ENCODE measurements at regions of chr20 and their contacts with region 1.

Region 1: DNA sequence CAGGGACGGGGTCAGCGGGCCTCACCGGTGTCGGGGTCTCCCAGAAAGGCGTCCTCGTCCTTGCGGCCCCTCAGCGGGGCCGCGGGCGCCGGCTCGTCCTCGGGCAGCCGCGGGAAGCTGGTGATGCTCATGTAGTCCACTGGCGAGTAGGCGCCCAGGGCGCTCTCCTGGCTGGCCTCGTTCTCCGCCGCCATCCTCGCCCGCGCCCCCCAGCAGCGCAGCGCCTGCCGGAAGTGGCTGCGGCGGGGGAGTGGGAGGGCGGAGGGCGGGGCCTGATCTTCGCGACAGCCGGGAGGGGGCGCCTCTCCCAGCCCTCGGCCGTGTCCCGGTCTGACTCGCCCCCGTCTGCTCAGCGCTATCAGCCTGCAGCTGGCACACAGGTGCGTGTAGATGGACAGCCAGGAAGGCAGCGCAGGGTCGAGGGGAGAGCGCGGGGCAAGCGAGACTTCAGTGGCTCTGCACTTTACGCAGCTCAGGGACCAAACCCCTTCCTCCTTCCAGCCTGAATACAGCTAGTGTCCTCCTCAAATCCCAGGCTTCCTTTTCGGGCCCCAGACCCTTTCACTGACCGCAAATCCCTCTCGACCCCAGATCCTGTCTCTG is at the start of gene GGT7:
- DNase-seq: peak; percentile 90
- H3K4me3 ChIP-seq: peak within 1 kb of the TSS; percentile 44 to 74 (median 68)
- H3K27ac ChIP-seq: peak within 1 kb of the TSS; percentile 69 to 77 (median 74)
- H3K4me1 ChIP-seq: peaks cover 19 to 47% (median 41%) of the 10 kb centered on the region in 4 donors
- H3K27me3 ChIP-seq: no peaks in the 10 kb centered on the region
- CTCF ChIP-seq: peak; percentile 67 to 82 (median 70)
- EP300 ChIP-seq: no peak
- POLR2A ChIP-seq: peak; percentile 36
- total RNA-seq, gene GGT7: 11.2 to 19.1 (median 15.1) TPM

Region 2: DNA sequence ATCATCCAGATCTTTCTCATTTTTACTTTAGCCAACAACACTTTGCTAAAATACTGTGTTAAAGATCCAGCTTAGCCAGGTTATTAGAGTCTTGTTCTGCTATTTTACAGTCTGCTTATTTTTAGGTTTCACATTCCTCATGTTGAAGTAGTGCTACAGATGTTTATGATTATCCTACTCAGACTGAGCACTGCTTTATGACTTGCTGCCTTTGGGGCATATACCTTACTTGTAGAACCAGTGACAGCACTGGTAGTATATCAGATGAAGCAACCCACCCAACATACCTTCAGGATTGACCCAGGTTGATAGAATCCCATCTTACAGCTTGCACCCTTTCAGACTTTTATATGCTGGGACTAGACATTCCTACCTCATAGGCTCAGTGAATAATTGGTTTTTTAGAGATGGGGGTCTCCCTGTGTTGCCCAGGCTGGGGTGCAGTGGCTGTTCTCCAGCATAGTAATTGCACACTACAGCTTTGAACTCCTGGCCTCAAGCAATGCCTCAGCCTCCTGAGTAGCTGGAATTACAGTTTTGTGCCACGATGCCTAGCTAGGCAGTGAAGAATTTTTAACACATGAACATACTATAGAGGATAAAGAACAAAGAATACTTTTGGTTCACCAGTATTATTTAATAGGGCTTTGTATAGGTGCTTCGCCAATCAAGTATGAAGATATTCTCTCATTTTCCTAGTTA is 420.3 kb before region 1 on chr20:
- in situ Hi-C with region 1: no loop called
- intact Hi-C with region 1: no loop called
- DNase-seq: no peak
- H3K4me3 ChIP-seq: no peak overlapping the region
- H3K27ac ChIP-seq: no peak overlapping the region
- H3K4me1 ChIP-seq: no peaks in the 10 kb centered on the region
- H3K27me3 ChIP-seq: no peaks in the 10 kb centered on the region
- CTCF ChIP-seq: no peak
- EP300 ChIP-seq: no peak
- POLR2A ChIP-seq: no peak

Region 3: DNA sequence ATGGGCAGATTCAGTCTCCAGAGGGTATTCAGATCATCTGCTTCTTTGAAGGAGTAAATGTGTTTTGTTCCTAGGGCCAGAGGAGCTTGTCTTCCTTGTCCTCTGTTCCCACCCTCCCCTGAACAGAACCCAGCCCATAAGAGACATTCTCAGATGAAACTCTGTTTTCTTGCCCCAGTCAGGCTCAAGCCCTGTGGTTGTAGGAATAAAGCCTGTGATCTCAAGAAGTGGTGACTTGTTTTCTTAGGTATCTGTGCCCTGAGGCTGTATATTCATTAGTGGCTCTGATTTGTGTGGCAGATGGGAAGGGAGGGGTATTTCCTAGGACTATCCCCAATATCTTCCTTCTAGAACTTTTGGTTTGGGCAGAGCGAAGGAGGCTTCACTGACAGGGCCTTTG is 55.0 kb after region 1 on chr20:
- in situ Hi-C with region 1: no loop called
- intact Hi-C with region 1: no loop called
- DNase-seq: no peak
- H3K4me3 ChIP-seq: no peak overlapping the region
- H3K27ac ChIP-seq: no peak overlapping the region
- H3K4me1 ChIP-seq: no peaks in the 10 kb centered on the region
- H3K27me3 ChIP-seq: no peaks in the 10 kb centered on the region
- CTCF ChIP-seq: no peak
- EP300 ChIP-seq: no peak
- POLR2A ChIP-seq: no peak

Region 4: DNA sequence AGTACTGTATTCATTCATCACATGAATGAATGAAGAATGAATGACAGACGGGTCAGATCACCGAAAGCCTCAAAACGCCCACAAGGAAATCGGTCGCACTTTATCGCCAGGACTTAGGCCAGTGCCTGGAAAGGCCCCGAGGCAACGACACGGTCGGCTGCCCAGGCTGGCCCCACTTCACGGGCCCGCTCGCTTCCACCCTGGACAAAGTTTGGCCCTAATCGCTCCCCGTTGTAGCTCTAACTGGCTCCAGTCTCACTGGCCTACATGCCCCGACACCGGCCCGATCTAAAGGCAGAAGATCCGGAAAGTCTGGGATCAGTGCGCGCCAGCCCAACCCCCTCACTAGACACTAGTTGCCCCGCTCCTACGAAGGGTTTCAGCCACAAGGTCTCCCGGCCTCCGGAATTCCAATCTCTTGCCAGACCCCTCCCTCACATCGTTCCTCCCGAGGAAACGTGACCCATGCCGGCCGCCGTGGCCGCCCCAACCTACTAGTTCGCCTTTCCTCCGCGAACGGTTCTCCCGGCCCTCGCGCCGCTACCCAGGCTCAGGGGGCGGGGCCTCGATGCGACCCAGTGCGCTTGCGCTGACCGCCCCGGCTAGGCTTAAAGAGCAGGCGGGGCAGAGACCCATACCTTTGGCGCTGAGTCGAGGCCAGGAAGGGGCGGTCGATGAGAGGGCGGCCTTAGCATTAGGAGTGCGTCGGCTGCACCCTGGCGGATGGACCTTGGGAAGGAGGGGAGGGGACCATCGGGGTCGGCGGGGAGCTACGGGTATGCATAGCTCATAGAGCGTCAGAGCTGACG is 82.7 kb after region 1 on chr20 and contains the starts of genes GSS and MYH7B:
- in situ Hi-C with region 1: loop called in 3 of 4 experiments (anchors 5 kb)
- intact Hi-C with region 1: loop called (anchors 5 kb)
- DNase-seq: peak; percentile 99
- H3K4me3 ChIP-seq: peak within 1 kb of the TSS; percentile 42 to 79 (median 63)
- H3K27ac ChIP-seq: peak within 1 kb of the TSS; percentile 86 to 91 (median 90)
- H3K4me1 ChIP-seq: peaks cover 11 to 42% (median 14%) of the 10 kb centered on the region in 4 donors
- H3K27me3 ChIP-seq: no peaks in the 10 kb centered on the region
- CTCF ChIP-seq: peak; percentile 35 to 84 (median 44)
- EP300 ChIP-seq: no peak
- POLR2A ChIP-seq: peak; percentile 84
- total RNA-seq, gene GSS: 125 to 364 (median 129) TPM
- total RNA-seq, gene MYH7B: 0.20 to 0.75 (median 0.52) TPM

Region 5: DNA sequence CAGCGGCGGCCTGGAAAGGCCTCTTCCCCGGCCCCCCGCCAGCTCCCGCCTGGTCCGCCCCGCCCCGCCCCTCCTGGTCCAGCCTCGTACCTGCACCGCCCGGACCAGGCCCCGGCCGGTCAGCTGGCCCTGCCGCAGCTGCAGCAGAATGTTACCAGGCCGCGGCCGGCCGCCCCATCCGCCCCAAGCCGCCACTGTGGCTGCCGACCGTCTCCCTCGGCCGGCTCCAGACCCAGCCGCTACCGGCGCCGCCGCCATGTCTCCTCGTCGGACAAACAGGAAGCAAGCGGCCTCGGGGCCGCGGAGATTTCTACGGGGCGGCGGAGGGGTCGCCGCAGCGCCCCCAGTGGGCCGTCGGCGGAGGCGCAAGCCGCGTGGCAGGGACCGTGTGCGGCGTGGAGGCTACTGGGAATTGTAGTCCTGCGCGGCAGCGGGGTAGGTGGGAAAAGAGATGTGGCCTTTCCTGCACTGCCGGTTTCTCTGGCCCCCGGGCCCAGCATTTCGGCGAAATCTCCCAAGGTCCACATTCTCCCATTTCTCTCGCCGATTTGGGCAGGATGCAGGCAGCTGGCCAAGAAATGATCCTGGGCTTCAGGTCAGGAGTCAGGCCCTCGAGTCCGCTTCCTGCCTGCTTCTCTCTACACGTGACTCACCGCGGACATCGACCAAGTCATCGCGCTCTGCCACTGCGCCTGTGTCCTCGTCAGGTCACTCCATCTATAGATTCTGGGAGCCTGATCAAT is 220.0 kb after region 1 on chr20 and contains the start of gene TRPC4AP:
- in situ Hi-C with region 1: loop called in 2 of 4 experiments (anchors 25 kb)
- intact Hi-C with region 1: no loop called
- DNase-seq: peak; percentile 91
- H3K4me3 ChIP-seq: peak within 1 kb of the TSS; percentile 80 to 89 (median 81)
- H3K27ac ChIP-seq: peak within 1 kb of the TSS; percentile 93 to 95 (median 93)
- H3K4me1 ChIP-seq: peaks cover 17 to 45% (median 28%) of the 10 kb centered on the region in 4 donors
- H3K27me3 ChIP-seq: no peaks in the 10 kb centered on the region
- CTCF ChIP-seq: peak; percentile 96 to 99 (median 98)
- EP300 ChIP-seq: no peak
- POLR2A ChIP-seq: peak; percentile 77
- total RNA-seq, gene TRPC4AP: 57.3 to 85.3 (median 70.1) TPM

Region 6: GRCh38 chr20:35207950-35208611 is 335.4 kb after region 1 on chr20:
- in situ Hi-C with region 1: loop called in 1 of 4 experiments (anchors 25 kb)
- intact Hi-C with region 1: no loop called
- DNase-seq: peak; percentile 86
- H3K4me3 ChIP-seq: peak overlapping the region in 1 of 4 donors; percentile 22
- H3K27ac ChIP-seq: peak overlapping the region; percentile 58 to 83 (median 74)
- H3K4me1 ChIP-seq: peaks cover 3 to 13% (median 8%) of the 10 kb centered on the region in 4 donors
- H3K27me3 ChIP-seq: no peaks in the 10 kb centered on the region
- CTCF ChIP-seq: peak; percentile 71 to 89 (median 78)
- EP300 ChIP-seq: no peak
- POLR2A ChIP-seq: no peak

Measured in transverse colon (tissue), 4 donors.